ENCODE measurements at regions of chr7 and their contacts with region 1.

Region 1: DNA sequence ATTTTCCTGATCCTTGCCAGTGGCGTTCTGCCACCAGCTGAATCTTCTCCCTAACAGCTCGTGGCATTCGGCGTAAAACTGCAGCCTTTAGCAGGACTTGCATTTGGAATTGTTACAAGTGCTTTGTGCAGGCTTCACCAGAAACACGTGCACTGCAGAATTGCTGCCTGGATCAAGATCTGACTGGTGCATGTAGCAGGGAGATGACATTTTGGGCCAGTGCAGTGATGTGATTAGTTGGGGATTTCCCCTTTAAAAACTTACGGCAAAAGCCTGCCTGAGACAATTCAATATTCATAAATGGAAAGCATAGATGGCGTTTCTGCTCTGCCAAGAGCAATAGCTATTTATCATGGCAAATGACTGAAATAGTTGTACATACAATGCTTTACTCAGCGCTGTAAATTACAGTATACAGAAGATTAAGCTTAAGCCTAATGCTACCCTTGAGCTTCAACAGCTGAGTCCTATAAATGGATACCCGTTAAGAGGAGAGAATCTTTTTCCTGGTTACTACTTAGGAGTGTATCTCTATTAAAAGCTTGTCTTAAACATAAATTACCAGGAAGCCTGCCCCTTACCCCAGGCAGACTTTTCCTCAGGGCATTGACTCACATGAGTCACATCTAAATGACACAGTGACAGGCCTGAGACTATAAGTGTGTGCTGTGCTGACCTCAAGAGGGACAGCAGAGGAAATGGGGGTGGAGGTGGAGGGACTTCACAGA is 106.3 kb downstream of the ATXN7L1 start:
- DNase-seq: peak; percentile 53
- ATAC-seq: peak; percentile 70
- H3K4me3 Mint-ChIP-seq: no peak overlapping the region
- H3K27ac Mint-ChIP-seq: no peak overlapping the region
- H3K4me1 Mint-ChIP-seq: peaks cover 40% of the 10 kb centered on the region
- H3K27me3 Mint-ChIP-seq: no peaks in the 10 kb centered on the region

Region 2: GRCh38 chr7:105800442-105800841 is 30.4 kb after region 1 on chr7:
- CTCF ChIA-PET with region 1: interaction called, 6 read pairs
- POLR2A ChIA-PET with region 1: interaction called, 3 read pairs
- intact Hi-C with region 1: loop called in 1 of 2 experiments (anchors 2 kb)
- DNase-seq: peak; percentile 67
- ATAC-seq: peak; percentile 90
- H3K4me3 Mint-ChIP-seq: no peak overlapping the region
- H3K27ac Mint-ChIP-seq: no peak overlapping the region
- H3K4me1 Mint-ChIP-seq: peaks cover 41% of the 10 kb centered on the region
- H3K27me3 Mint-ChIP-seq: no peaks in the 10 kb centered on the region

Region 3: DNA sequence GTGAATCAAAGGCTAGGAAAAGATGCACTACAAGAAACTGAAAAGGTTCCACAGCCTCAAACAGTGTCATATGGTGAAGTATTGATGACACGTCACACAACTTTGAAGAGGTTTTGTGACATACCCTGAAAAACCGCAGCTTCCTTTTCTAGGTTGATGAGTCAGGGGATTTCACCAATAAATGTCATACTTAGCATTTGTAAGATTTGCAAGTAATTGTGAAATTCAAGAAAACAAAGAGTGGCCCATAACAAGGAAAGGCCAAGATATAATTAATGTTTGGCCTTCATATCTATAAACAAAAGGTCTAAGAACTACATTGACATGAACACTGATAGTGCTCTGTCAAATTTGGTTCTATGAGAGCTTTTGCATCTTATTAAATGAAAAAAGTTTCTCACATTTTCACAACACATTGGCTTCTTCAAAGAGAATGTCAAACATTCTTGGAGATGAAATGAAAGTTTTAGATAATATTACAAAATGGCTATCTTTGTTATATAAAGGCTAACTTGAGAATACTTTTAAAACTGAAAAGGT is 576.7 kb after region 1 on chr7:
- CTCF ChIA-PET with region 1: no interaction called
- POLR2A ChIA-PET with region 1: no interaction called
- intact Hi-C with region 1: no loop called
- DNase-seq: peak; percentile 65
- ATAC-seq: peak; percentile 73
- H3K4me3 Mint-ChIP-seq: peak overlapping the region; percentile 66
- H3K27ac Mint-ChIP-seq: peak overlapping the region; percentile 100
- H3K4me1 Mint-ChIP-seq: peaks cover 54% of the 10 kb centered on the region
- H3K27me3 Mint-ChIP-seq: peaks cover 12% of the 10 kb centered on the region

Measured in activated CD4-positive, alpha-beta T cell treated with anti-CD3 and anti-CD28 coated beads for 36 hours (primary cell).